CD8-positive, alpha-beta T cell (primary cell): ENCODE measurements at regions of chr10 and their contacts with region 1.

Region 1: DNA sequence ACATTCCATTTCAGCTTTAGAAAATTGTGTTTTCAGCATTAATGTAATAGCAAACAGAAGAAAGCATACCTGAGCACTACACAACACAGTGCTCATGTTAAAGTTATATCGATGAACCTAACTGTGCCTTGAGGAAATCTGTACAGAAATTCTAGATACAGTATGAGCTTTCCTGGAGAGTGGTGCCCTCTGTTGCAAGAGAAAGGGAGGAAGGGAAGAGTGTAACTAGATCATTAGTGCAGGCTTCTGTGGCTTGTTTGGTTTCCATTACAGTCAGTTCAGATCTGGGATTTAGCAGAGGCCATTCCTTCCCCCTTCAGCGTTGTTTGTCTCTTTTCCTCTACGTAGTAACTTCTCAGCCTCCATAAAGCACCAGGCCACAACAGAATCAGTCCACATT is 139.7 kb downstream of the HTR7 start:
- DNase-seq: no peak
- ATAC-seq: no peak
- H3K4me3 ChIP-seq: no peak overlapping the region
- H3K4me3 Mint-ChIP-seq: no peak overlapping the region
- H3K27ac ChIP-seq: no peak overlapping the region
- H3K27ac Mint-ChIP-seq: no peak overlapping the region
- H3K4me1 ChIP-seq: peaks cover 5% of the 10 kb centered on the region
- H3K4me1 Mint-ChIP-seq: peaks cover 6% of the 10 kb centered on the region
- H3K27me3 ChIP-seq: no peaks in the 10 kb centered on the region
- H3K27me3 Mint-ChIP-seq: peaks cover 5% of the 10 kb centered on the region
- CTCF ChIP-seq: no peak

Region 2: DNA sequence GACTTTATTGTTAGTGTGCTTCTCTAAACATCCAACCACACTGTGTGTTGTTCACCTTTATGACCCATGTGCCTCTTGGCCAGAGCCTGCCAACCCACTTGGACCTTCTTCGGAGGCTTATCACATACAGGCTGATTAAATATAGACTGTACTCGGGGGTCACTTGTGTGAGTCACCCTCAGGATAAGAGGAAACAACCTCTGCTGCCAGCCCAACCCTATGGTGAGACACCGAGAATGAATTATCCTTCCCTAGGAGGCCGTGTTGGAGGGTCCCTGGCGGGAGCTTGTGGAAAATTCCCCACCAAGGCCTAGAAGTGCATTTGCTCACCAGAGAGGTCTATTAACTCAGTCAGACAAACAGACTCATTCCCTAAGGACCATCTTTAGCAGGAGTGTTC is 1664.6 kb before region 1 on chr10:
- CTCF ChIA-PET with region 1: no interaction called
- POLR2A ChIA-PET with region 1: no interaction called
- intact Hi-C with region 1: loop called in 1 of 2 experiments (anchors 10 kb)
- DNase-seq: no peak
- ATAC-seq: no peak
- H3K4me3 ChIP-seq: no peak overlapping the region
- H3K4me3 Mint-ChIP-seq: no peak overlapping the region
- H3K27ac ChIP-seq: no peak overlapping the region
- H3K27ac Mint-ChIP-seq: no peak overlapping the region
- H3K4me1 ChIP-seq: no peaks in the 10 kb centered on the region
- H3K4me1 Mint-ChIP-seq: no peaks in the 10 kb centered on the region
- H3K27me3 ChIP-seq: no peaks in the 10 kb centered on the region
- H3K27me3 Mint-ChIP-seq: no peaks in the 10 kb centered on the region
- CTCF ChIP-seq: no peak